ENCODE measurements at regions of chr17 and their contacts with region 1.

Region 1: GRCh38 chr17:46764709-46765401 is 53.6 kb downstream of the WNT3 start:
- DNase-seq: peak; percentile 84
- ATAC-seq: peak; percentile 76 to 86

Region 2: GRCh38 chr17:46818319-46818928 is 53.6 kb after region 1 on chr17 and contains the start of gene WNT3:
- intact Hi-C with region 1: loop called in 1 of 2 experiments (anchors 5 kb)
- DNase-seq: peak; percentile 38
- ATAC-seq: peak; percentile 38 to 69
- total RNA-seq, gene WNT3: 1.1 to 2.1 TPM

Region 3: GRCh38 chr17:46831573-46832330 is 66.9 kb after region 1 on chr17:
- intact Hi-C with region 1: no loop called
- DNase-seq: no peak
- ATAC-seq: peak in 1 of 2 donors; percentile 81

Region 4: DNA sequence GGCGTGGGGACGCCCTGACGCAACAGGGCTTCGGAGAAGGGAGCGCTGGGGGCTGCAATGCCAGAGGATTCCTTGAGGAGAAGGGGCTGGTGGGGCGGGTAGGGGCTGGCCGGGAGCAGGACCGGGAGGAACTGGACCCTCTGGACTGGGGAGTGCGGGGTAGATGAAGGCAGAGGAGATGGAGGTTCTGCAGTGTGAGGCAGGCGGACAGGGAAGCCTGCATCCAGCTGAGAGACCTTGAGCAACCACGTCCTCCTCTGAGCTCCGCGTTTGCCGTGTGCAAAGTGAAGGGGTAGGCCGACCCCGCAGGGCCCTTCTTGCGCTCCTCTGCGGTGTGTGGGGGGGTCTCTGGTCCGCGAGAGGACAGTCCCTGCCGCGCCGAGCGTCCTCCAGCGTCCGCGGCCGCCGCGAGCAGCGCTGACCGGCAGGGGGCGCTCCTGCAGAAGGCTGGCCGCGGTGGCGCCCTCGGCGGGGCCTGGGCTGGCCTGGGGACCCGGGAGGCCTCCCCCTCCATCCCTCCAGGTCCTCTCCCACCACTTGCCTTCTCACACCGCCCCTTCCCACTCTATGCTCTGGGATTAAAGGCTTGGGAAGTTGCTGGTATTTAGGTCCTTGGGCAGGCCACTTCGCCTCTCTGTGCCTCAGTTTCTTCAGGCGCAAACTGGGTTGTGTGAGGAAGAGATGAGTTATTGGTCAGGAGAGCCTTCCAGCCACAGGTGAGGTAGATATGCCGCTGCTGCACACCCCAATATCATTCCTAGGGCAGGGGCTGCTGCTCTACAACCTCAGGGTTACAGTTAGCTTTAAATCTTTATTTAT is 76.9 kb after region 1 on chr17:
- intact Hi-C with region 1: no loop called
- DNase-seq: peak; percentile 34
- ATAC-seq: peak; percentile 44 to 75

Region 5: DNA sequence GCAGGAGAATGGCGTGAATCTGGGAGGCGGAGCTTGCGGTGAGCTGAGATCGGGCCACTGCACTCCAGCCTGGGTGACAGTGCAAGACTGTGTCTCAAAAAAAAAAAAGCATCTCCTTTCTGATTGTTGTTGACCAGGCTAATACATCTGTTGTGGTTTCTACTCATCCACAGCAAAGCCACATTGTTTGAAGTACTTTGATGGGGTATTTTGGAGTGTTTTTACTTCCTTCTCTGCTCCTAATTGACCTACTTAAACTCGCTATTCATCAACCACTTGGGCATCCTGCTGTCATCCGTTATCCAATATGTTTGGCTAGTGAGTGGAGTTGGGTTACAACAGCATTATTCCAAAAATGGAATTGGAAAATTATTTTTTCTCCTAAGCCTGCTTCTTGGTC is 427.7 kb after region 1 on chr17:
- intact Hi-C with region 1: no loop called
- DNase-seq: no peak
- ATAC-seq: no peak

Measured in left cardiac atrium (tissue), 4 donors.